Caco-2 (cell line): ENCODE measurements at regions of chr6 and their contacts with region 1.

Region 1: GRCh38 chr6:139996253-139996834 is 621.9 kb upstream of the CITED2 start:
- DNase-seq: peak; percentile 64 to 71
- H3K4me3 ChIP-seq: no peak overlapping the region
- H3K4me3 Mint-ChIP-seq: no peak overlapping the region
- H3K27ac Mint-ChIP-seq: no peak overlapping the region
- H3K4me1 ChIP-seq: no peaks in the 10 kb centered on the region
- H3K4me1 Mint-ChIP-seq: peaks cover 6% of the 10 kb centered on the region
- H3K27me3 ChIP-seq: no peaks in the 10 kb centered on the region
- H3K27me3 Mint-ChIP-seq: no peaks in the 10 kb centered on the region
- CTCF ChIP-seq: peak; percentile 54 to 55

Region 2: GRCh38 chr6:139230391-139230840 is 765.9 kb before region 1 on chr6:
- CTCF ChIA-PET with region 1: no interaction called
- POLR2A ChIA-PET with region 1: no interaction called
- intact Hi-C with region 1: loop called (anchors 1 kb)
- DNase-seq: peak; percentile 41 to 53
- H3K4me3 ChIP-seq: no peak overlapping the region
- H3K4me3 Mint-ChIP-seq: no peak overlapping the region
- H3K27ac Mint-ChIP-seq: no peak overlapping the region
- H3K4me1 ChIP-seq: no peaks in the 10 kb centered on the region
- H3K4me1 Mint-ChIP-seq: peaks cover 12% of the 10 kb centered on the region
- H3K27me3 ChIP-seq: no peaks in the 10 kb centered on the region
- H3K27me3 Mint-ChIP-seq: no peaks in the 10 kb centered on the region
- CTCF ChIP-seq: peak in 1 of 2 experiments; percentile 25

Region 3: DNA sequence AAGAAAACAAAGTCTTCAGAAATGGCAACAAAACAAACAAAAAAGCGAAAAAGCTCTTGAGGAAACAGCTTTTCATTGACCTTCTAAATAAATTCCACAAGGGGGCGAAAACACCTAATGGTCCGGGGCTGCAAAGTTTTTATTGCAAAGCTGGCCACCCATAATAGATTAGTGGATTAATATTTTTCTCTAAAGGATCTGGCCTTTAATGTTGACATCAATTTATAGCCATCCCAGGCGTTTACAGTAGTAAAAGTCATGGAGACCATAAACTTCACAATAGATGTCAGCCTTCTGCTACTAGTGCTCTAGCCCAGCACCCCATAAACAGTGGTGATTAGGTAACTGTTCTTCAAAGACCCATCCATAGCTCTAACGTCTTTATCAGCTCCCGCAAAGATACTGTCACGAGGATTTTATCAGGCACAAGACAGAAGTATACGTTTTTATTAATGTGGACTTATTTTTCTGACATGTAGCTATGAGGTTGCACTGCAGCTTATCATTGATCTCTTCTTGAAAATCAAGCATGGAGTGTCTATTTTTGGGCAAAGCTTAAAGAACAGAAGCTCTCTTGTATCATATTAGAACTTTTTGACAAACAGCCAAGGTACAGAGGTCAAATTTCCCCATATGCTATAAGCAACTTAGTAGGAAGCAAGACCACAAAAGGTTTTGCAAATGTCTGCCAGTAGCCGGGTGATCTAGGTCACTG is 626.6 kb before region 1 on chr6:
- CTCF ChIA-PET with region 1: interaction called, 8 read pairs
- POLR2A ChIA-PET with region 1: no interaction called
- intact Hi-C with region 1: loop called (anchors 1 kb)
- DNase-seq: peak in 1 of 2 experiments; percentile 46
- H3K4me3 ChIP-seq: no peak overlapping the region
- H3K4me3 Mint-ChIP-seq: peak overlapping the region; percentile 48
- H3K27ac Mint-ChIP-seq: peak overlapping the region; percentile 61
- H3K4me1 ChIP-seq: peaks cover 45% of the 10 kb centered on the region
- H3K4me1 Mint-ChIP-seq: peaks cover 22% of the 10 kb centered on the region
- H3K27me3 ChIP-seq: no peaks in the 10 kb centered on the region
- H3K27me3 Mint-ChIP-seq: no peaks in the 10 kb centered on the region
- CTCF ChIP-seq: peak; percentile 62 to 64

Region 4: GRCh38 chr6:139540276-139540675 is 456.1 kb before region 1 on chr6:
- CTCF ChIA-PET with region 1: no interaction called
- POLR2A ChIA-PET with region 1: no interaction called
- intact Hi-C with region 1: loop called (anchors 1 kb)
- DNase-seq: no peak
- H3K4me3 ChIP-seq: no peak overlapping the region
- H3K4me3 Mint-ChIP-seq: peak overlapping the region; percentile 57
- H3K27ac Mint-ChIP-seq: peak overlapping the region; percentile 68
- H3K4me1 ChIP-seq: peaks cover 45% of the 10 kb centered on the region
- H3K4me1 Mint-ChIP-seq: peaks cover 29% of the 10 kb centered on the region
- H3K27me3 ChIP-seq: no peaks in the 10 kb centered on the region
- H3K27me3 Mint-ChIP-seq: no peaks in the 10 kb centered on the region
- CTCF ChIP-seq: no peak

Region 5: DNA sequence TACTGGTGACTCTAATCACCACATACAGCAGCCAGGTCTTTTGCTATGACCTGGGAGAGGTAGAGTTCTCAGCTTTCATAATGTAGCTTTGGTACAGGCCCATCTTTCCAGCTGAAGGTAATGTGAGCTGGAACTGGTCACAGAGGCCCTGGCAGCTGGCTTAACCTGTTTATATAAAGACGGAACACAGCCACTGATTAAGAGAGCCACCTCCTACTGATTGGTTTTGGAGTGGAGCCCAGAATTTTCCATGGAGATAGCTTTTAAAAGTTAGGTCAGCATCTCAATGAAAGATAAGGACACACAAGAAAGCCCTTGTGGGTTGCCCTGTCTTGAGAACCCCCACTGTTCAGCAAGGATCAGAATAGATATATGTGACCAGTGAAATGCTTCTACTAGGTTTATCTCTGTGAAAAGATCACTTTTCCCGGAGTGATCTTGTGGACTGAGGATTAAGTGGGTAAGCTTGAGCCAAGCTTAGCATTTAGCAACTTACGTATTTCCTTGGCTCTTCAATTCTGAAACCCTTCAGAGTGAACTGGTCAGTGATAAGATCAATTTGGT is 408.2 kb before region 1 on chr6:
- CTCF ChIA-PET with region 1: no interaction called
- POLR2A ChIA-PET with region 1: no interaction called
- intact Hi-C with region 1: loop called (anchors 5 kb)
- DNase-seq: peak; percentile 30 to 45
- H3K4me3 ChIP-seq: no peak overlapping the region
- H3K4me3 Mint-ChIP-seq: peak overlapping the region; percentile 22
- H3K27ac Mint-ChIP-seq: peak overlapping the region; percentile 91
- H3K4me1 ChIP-seq: peaks cover 71% of the 10 kb centered on the region
- H3K4me1 Mint-ChIP-seq: peaks cover 71% of the 10 kb centered on the region
- H3K27me3 ChIP-seq: no peaks in the 10 kb centered on the region
- H3K27me3 Mint-ChIP-seq: no peaks in the 10 kb centered on the region
- CTCF ChIP-seq: no peak

Region 6: GRCh38 chr6:139881728-139882211 is 114.6 kb before region 1 on chr6:
- CTCF ChIA-PET with region 1: no interaction called
- POLR2A ChIA-PET with region 1: no interaction called
- intact Hi-C with region 1: loop called (anchors 1 kb)
- DNase-seq: peak in 1 of 2 experiments; percentile 48
- H3K4me3 ChIP-seq: no peak overlapping the region
- H3K4me3 Mint-ChIP-seq: no peak overlapping the region
- H3K27ac Mint-ChIP-seq: no peak overlapping the region
- H3K4me1 ChIP-seq: peaks cover 16% of the 10 kb centered on the region
- H3K4me1 Mint-ChIP-seq: peaks cover 2% of the 10 kb centered on the region
- H3K27me3 ChIP-seq: no peaks in the 10 kb centered on the region
- H3K27me3 Mint-ChIP-seq: no peaks in the 10 kb centered on the region
- CTCF ChIP-seq: peak; percentile 37 to 46

Region 7: DNA sequence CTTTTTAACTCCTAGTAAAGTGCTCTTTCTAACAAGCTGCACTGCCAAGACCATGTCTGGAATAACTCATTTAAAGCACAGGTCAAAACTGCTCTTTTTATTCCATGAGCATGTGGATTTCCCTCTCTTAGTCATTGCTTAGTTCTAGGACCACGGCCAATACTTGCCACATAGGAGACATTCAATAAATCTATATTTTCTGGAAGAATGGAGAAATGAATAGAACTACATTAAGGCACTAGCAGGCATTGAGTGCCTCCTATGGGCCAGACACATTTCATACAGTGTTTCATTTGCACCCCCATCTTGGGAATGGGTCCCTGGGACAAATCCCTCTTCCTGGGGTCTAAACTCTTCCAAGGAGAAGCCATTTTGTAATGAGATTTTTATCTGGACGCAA is 69.1 kb before region 1 on chr6:
- CTCF ChIA-PET with region 1: no interaction called
- POLR2A ChIA-PET with region 1: no interaction called
- intact Hi-C with region 1: no loop called
- DNase-seq: no peak
- H3K4me3 ChIP-seq: no peak overlapping the region
- H3K4me3 Mint-ChIP-seq: no peak overlapping the region
- H3K27ac Mint-ChIP-seq: no peak overlapping the region
- H3K4me1 ChIP-seq: peaks cover 20% of the 10 kb centered on the region
- H3K4me1 Mint-ChIP-seq: peaks cover 15% of the 10 kb centered on the region
- H3K27me3 ChIP-seq: no peaks in the 10 kb centered on the region
- H3K27me3 Mint-ChIP-seq: no peaks in the 10 kb centered on the region
- CTCF ChIP-seq: no peak